ENCODE measurements at regions of chr7 and their contacts with region 1.

Region 1: GRCh38 chr7:128425850-128426249 is 16.1 kb upstream of the IMPDH1 start:
- DNase-seq: peak; percentile 57
- ATAC-seq: peak; percentile 80
- H3K4me3 ChIP-seq: no peak overlapping the region
- H3K27ac ChIP-seq: no peak overlapping the region
- H3K4me1 ChIP-seq: peaks cover 0 to 16% of the 10 kb centered on the region in 2 experiments; a peak in 1 of 4 replicates
- H3K27me3 ChIP-seq: no peaks in the 10 kb centered on the region
- CTCF ChIP-seq: peak; percentile 91 to 97 (median 95)
- POLR2A ChIP-seq: no peak
- RAD21 ChIP-seq: peak; percentile 93

Region 2: DNA sequence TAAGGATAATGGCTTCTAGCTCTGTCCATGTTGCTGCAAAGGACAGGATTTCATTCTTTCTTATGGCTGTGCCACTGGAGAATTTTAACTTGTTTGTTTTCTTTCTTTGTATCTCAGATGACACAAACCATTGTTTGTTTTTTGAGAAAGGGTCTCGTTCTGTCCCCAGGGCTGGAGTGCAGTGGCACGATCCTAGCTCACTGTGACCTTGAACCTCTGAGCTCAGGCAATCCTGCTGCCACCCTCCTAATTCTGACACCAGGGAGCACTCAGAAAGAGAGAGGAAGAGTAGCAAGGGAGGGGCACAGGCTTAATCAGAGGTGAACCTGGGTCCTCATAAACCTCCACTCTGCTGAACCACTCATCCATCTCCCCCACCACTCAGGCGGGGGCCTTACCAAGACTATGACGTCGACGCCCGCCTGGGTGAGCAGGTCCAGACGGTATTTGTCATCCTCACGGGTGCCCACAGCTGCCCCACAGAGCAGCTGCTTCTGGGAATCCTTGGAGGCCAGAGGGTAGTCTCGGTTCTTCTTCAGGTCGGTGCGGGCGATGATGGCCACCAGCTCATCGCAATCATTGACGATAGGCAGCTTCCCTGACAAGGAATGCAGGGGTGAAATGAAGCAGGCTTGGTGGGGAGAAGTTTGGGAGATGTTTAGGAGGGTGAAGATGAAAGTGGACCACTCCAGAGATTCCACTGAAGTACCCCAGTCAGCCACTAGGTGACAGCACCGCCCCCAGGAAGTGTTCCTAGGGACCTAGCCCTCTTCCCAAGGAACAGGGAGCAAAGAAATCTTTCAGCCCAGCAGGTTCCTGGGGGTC is 27.6 kb before region 1 on chr7:
- CTCF ChIA-PET with region 1: interaction called, 24 read pairs
- POLR2A ChIA-PET with region 1: no interaction called
- RAD21 ChIA-PET with region 1: interaction called in 1 of 2 experiments, 3 read pairs
- intact Hi-C with region 1: loop called (anchors 1 kb)
- DNase-seq: no peak
- ATAC-seq: peak; percentile 89
- H3K4me3 ChIP-seq: no peak overlapping the region
- H3K27ac ChIP-seq: no peak overlapping the region
- H3K4me1 ChIP-seq: no peaks in the 10 kb centered on the region
- H3K27me3 ChIP-seq: no peaks in the 10 kb centered on the region
- CTCF ChIP-seq: peak; percentile 88 to 96 (median 95)
- POLR2A ChIP-seq: no peak
- RAD21 ChIP-seq: peak; percentile 86

Region 3: DNA sequence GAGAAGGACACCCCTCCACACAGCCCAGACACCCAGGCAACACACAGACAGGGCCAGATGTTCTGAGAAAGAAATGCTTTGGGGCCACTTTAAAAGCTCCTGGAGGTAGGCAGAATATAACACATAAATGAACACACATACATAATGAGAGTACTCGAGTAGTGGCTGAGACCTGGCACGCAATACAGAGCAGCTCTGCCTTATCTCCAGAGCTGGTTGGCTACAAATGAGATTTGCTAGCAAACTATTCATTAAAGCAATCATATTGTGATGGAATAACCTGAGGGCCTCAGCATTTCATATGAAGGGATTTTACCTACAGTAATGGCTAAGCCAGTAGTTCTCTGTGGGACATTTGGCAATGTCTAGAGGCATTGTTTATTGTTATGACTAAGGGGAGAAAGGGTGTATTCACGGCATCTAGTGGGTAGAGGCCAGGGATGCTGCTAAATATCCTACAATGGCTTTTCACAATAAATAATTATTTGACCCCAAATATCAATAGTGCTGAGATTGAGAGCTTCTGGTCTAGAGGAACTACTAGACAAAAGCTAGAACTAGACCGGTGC is 10.5 kb before region 1 on chr7:
- CTCF ChIA-PET with region 1: interaction called, 42 read pairs
- POLR2A ChIA-PET with region 1: interaction called, 3 read pairs
- RAD21 ChIA-PET with region 1: no interaction called
- intact Hi-C with region 1: no loop called
- DNase-seq: no peak
- ATAC-seq: no peak
- H3K4me3 ChIP-seq: no peak overlapping the region
- H3K27ac ChIP-seq: no peak overlapping the region
- H3K4me1 ChIP-seq: peaks cover 5 to 9% of the 10 kb centered on the region in 2 experiments
- H3K27me3 ChIP-seq: no peaks in the 10 kb centered on the region
- CTCF ChIP-seq: no peak
- POLR2A ChIP-seq: no peak
- RAD21 ChIP-seq: no peak

Region 4: DNA sequence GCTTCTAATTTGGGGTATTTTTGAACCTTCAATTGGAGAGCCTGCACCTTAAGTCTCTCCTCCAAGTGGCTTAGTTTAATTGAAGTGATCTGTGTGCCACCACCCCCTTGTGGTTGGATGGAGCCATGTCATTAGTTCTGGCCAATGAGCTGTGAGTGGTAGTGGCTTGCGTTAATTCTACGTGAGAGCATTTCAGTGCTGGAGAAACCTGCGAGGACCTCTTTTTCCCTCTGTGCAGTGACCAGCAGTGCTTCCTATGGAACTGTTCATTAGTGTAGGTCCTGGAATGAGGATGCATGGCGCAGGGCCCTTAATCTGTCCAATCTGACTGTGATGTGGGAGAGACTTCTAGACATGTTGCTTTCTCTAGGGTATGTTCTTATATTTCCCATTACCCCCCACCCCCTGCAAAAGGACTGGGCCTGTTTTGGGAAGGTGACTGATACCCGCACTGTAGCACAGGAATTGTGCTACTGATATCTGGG is 33.6 kb after region 1 on chr7:
- CTCF ChIA-PET with region 1: interaction called, 114 read pairs
- POLR2A ChIA-PET with region 1: interaction called, 7 read pairs
- RAD21 ChIA-PET with region 1: interaction called, 7 to 14 read pairs
- intact Hi-C with region 1: loop called (anchors 1 kb)
- DNase-seq: peak; percentile 59
- ATAC-seq: peak; percentile 58
- H3K4me3 ChIP-seq: no peak overlapping the region
- H3K27ac ChIP-seq: no peak overlapping the region
- H3K4me1 ChIP-seq: peaks cover 10 to 35% of the 10 kb centered on the region in 2 experiments
- H3K27me3 ChIP-seq: no peaks in the 10 kb centered on the region
- CTCF ChIP-seq: peak; percentile 59 to 81 (median 76); a peak in 5 of 6 replicates
- POLR2A ChIP-seq: no peak
- RAD21 ChIP-seq: peak; percentile 56

Region 5: GRCh38 chr7:129210256-129210988 is 784.6 kb after region 1 on chr7:
- CTCF ChIA-PET with region 1: interaction called, 9 read pairs
- POLR2A ChIA-PET with region 1: no interaction called
- RAD21 ChIA-PET with region 1: no interaction called
- intact Hi-C with region 1: loop called (anchors 1 kb)
- DNase-seq: no peak
- ATAC-seq: peak; percentile 91
- H3K4me3 ChIP-seq: no peak overlapping the region
- H3K27ac ChIP-seq: no peak overlapping the region
- H3K4me1 ChIP-seq: no peaks in the 10 kb centered on the region
- H3K27me3 ChIP-seq: no peaks in the 10 kb centered on the region
- CTCF ChIP-seq: peak; percentile 76 to 93 (median 87)
- POLR2A ChIP-seq: no peak
- RAD21 ChIP-seq: peak; percentile 90

Measured in HCT116 (cell line).